ENCODE measurements at regions of chr17 and their contacts with region 1.

Region 1: GRCh38 chr17:44210342-44211192 is 8.9 kb downstream of the UBTF start:
- DNase-seq: peak; percentile 94
- ATAC-seq: peak; percentile 89
- H3K4me3 Mint-ChIP-seq: no peak overlapping the region
- H3K27ac Mint-ChIP-seq: peak overlapping the region; percentile 42
- H3K4me1 Mint-ChIP-seq: peaks cover 20% of the 10 kb centered on the region
- H3K27me3 Mint-ChIP-seq: no peaks in the 10 kb centered on the region
- CTCF ChIP-seq: peak; percentile 95

Region 2: DNA sequence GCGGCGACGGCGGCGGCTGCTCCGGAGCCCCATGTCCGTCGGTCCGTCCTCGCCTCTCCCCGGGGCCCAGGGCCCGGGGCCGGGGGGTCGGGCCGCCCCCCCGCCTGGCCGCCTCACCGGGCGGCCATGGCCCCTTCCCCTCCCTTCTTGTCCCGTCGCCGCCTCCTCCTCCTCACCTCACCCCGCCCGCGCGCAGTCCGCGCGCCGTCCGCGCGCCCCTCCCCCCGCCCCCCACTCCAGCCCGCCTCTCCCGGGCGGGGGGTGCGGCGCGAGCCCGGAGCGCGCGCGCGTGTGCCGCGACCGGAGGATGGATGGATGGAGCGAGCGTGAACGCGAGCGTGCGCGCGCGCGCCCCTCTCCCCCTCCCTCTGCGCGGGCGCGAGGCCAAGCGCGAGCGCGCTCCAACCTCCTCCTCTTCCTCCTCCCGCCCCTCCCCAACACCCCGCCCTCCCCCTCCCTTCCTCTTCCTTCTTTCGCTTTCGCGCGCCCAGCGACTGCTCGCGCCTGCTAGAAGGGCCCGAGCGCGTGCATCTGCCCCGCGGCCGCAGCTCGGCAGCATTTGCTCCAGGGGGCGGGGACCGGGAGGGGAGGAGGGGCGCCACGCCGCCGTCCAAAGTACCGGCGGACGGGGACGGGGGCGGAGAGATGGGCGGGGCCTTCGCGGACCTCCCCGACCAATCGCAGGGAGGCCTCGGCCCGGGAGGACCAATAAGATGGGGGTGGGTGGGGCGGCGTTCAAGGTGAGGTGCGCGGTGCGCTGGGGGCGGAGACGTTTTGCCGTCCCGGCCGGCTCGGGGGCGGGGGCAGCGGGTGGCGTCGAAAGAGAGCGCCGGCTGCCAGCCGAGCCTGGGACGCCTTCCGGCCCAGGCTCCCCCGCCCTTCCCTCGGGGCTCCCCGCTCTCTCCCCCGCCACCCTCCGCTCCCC is 10.8 kb before region 1 on chr17 and contains the start of gene ATXN7L3:
- CTCF ChIA-PET with region 1: interaction called, 47 read pairs
- POLR2A ChIA-PET with region 1: interaction called, 4 read pairs
- DNase-seq: peak; percentile 100
- ATAC-seq: peak; percentile 87
- H3K4me3 Mint-ChIP-seq: peak within 1 kb of the TSS; percentile 85
- H3K27ac Mint-ChIP-seq: peak within 1 kb of the TSS; percentile 98
- H3K4me1 Mint-ChIP-seq: peaks cover 24% of the 10 kb centered on the region
- H3K27me3 Mint-ChIP-seq: no peaks in the 10 kb centered on the region
- CTCF ChIP-seq: no peak
- total RNA-seq, gene ATXN7L3: 113 to 124 TPM (median 114 TPM) in 3 replicates

Region 3: DNA sequence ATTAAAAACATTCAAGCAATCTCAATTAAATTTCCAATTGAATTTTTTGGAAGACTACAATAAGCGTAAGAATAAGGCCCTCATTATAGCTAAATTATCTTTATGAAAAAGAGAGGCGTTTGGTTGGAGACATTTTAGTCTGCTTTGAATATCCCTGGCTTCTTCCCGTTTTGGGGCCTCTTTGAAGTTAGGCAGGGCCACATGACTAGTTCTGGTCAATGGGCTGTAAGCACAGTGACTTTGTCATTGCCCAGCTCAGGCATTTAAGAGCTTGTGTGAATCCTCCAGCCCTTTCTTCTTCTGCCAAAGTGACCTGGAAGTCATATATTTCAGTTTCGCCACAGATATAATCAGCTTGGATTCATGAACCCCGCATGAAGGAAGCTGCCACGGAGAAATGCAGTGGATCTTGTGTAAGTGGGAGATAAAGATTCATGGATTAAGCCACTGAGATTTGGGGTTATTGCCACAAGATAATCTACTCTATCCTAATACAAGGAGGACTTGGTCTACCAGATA is 30.6 kb after region 1 on chr17:
- CTCF ChIA-PET with region 1: no interaction called
- POLR2A ChIA-PET with region 1: no interaction called
- DNase-seq: no peak
- ATAC-seq: no peak
- H3K4me3 Mint-ChIP-seq: no peak overlapping the region
- H3K27ac Mint-ChIP-seq: no peak overlapping the region
- H3K4me1 Mint-ChIP-seq: peaks cover 4% of the 10 kb centered on the region
- H3K27me3 Mint-ChIP-seq: peaks cover 5% of the 10 kb centered on the region; the same call in 1 of the 2 replicates
- CTCF ChIP-seq: no peak

Region 4: GRCh38 chr17:44308320-44308818 is 97.8 kb after region 1 on chr17 and contains the start of gene RUNDC3A:
- CTCF ChIA-PET with region 1: interaction called, 77 read pairs
- POLR2A ChIA-PET with region 1: interaction called, 3 read pairs
- DNase-seq: peak; percentile 96
- ATAC-seq: peak; percentile 91
- H3K4me3 Mint-ChIP-seq: peak within 1 kb of the TSS; percentile 69
- H3K27ac Mint-ChIP-seq: peak within 1 kb of the TSS; percentile 72; the same call in 1 of the 2 replicates
- H3K4me1 Mint-ChIP-seq: peaks cover 41% of the 10 kb centered on the region
- H3K27me3 Mint-ChIP-seq: peaks cover 9% of the 10 kb centered on the region
- CTCF ChIP-seq: no peak
- total RNA-seq, gene RUNDC3A: 5.1 to 6.5 TPM (median 5.2 TPM) in 3 replicates

Region 5: GRCh38 chr17:44324571-44325275 is 114.2 kb after region 1 on chr17 and contains the start of gene SLC25A39:
- CTCF ChIA-PET with region 1: interaction called, 77 read pairs
- POLR2A ChIA-PET with region 1: interaction called, 3 read pairs
- DNase-seq: peak; percentile 94
- ATAC-seq: peak; percentile 71
- H3K4me3 Mint-ChIP-seq: peak within 1 kb of the TSS; percentile 86
- H3K27ac Mint-ChIP-seq: peak within 1 kb of the TSS; percentile 76
- H3K4me1 Mint-ChIP-seq: peaks cover 13% of the 10 kb centered on the region
- H3K27me3 Mint-ChIP-seq: peaks cover 8% of the 10 kb centered on the region
- CTCF ChIP-seq: no peak
- total RNA-seq, gene SLC25A39: 254 to 271 TPM (median 268 TPM) in 3 replicates

Region 6: GRCh38 chr17:44376124-44376523 is 165.6 kb after region 1 on chr17:
- CTCF ChIA-PET with region 1: interaction called, 12 read pairs
- POLR2A ChIA-PET with region 1: no interaction called
- DNase-seq: peak; percentile 74
- ATAC-seq: peak; percentile 46
- H3K4me3 Mint-ChIP-seq: 0 out of 2 replicates have a peak overlapping the region, but pooled peaks have one; percentile 18
- H3K27ac Mint-ChIP-seq: no peak overlapping the region
- H3K4me1 Mint-ChIP-seq: peaks cover 27% of the 10 kb centered on the region
- H3K27me3 Mint-ChIP-seq: peaks cover 5% of the 10 kb centered on the region; the same call in 1 of the 2 replicates
- CTCF ChIP-seq: peak; percentile 55

Measured in WTC11 (cell line).